Mammary epithelial cell (primary cell): ENCODE measurements at regions of chr7 and their contacts with region 1.

Region 1: DNA sequence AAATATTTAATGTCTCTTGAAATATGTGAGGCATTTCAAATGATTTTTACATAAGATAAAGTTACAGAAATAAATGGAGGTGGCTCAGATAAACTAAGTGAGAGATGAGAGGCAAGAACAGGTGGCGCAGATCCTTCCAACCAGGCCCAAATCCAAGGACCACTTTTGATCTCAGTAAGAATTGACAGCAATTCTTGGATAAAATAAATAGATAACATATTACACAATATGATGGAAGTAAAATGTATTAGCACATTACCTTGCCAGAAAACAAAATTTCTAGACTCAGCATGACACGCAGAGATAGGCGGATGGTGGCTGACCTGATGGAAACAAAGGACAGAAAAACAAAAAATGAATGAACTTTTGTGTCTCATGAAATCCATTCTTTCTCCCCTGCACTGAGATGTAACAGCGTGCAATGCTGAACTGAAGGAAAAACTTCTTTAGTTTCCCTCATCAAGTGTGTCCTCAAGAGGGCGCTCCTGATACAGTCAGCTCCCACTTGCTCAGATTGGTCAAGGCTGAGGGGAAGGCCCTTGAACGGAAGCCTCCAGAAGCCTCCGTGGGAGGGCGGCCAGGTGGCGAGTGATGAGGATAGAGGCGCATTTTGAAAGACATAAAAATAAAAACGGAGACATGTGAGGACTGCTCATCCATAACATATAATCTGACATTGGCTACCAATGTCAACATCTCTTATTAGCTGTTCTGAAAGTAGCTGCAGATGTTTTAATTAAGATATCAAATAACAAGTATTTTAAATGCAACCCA is 62.8 kb upstream of the GSDME start:
- DNase-seq: peak; percentile 82
- H3K4me3 ChIP-seq: no peak overlapping the region
- H3K27ac ChIP-seq: peak overlapping the region; percentile 98
- H3K4me1 ChIP-seq: peaks cover 36% of the 10 kb centered on the region
- H3K27me3 ChIP-seq: no peaks in the 10 kb centered on the region
- CTCF ChIP-seq: peak; percentile 94

Region 2: DNA sequence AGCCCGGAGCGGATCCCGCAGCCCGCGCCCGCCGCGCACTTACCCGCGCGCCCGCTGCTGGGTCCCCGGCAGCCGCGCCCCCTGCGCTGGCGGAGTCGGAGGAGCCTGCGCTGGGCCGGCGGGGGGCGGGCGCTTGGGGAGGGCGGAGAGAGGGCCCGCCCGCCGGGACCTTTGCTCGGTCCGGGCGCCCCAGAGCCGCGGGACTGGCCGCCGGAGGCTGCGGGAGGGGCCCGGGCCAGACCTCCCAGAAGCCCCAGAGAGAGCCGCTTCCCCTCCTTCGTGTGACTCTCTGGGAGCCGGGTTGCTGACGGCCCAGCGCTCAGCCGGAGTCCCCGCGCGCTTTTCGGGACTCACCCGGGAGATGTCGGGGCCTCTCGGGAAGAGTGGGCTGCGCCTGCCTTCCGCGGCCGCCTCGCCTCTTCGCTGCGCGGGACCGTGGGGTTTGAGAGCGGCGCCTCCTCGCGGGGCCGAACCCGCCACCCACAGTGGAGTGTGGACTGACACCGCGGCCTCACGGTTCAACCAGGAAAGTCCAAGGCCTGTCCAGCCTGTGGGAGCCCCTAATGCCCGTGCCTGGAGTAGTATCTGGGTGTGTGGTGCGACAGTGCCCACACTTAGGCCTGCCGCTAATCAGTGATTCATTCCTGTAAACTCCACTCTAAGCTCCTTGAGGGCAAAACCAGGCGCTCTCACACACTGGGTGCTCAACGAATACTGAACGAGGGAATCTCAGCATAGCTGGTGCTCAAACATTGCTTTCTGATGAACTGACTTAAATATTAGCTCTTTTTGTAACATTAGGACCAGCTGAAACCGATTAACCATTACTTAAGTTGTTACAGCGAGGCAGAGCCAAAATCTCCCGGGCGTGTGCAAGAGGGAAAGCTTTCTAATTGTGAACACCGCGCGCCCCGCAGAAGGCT is 62.5 kb before region 1 on chr7 and contains the start of gene GSDME:
- CTCF ChIA-PET with region 1: no interaction called
- dilution Hi-C with region 1: no loop called
- in situ Hi-C with region 1: no loop called
- intact Hi-C with region 1: loop called (anchors 2 kb)
- DNase-seq: peak; percentile 70
- H3K4me3 ChIP-seq: peak within 1 kb of the TSS; percentile 66 to 73 (median 66)
- H3K27ac ChIP-seq: peak within 1 kb of the TSS; percentile 97
- H3K4me1 ChIP-seq: peaks cover 37% of the 10 kb centered on the region
- H3K27me3 ChIP-seq: no peaks in the 10 kb centered on the region
- CTCF ChIP-seq: peak in 1 of 2 donors; percentile 24
- total RNA-seq, gene GSDME: 76.8 to 95.6 TPM

Region 3: GRCh38 chr7:24882989-24883621 is 63.0 kb after region 1 on chr7:
- CTCF ChIA-PET with region 1: no interaction called
- dilution Hi-C with region 1: no loop called
- in situ Hi-C with region 1: no loop called
- intact Hi-C with region 1: loop called (anchors 2 kb)
- DNase-seq: peak; percentile 71
- H3K4me3 ChIP-seq: no peak overlapping the region
- H3K27ac ChIP-seq: peak overlapping the region; percentile 31
- H3K4me1 ChIP-seq: peaks cover 14% of the 10 kb centered on the region
- H3K27me3 ChIP-seq: no peaks in the 10 kb centered on the region
- CTCF ChIP-seq: no peak

Region 4: GRCh38 chr7:24971333-24972165 is 151.4 kb after region 1 on chr7:
- CTCF ChIA-PET with region 1: no interaction called
- dilution Hi-C with region 1: no loop called
- in situ Hi-C with region 1: loop called in 1 of 2 experiments (anchors 5 kb)
- intact Hi-C with region 1: loop called (anchors 2 kb)
- DNase-seq: peak; percentile 94
- H3K4me3 ChIP-seq: peak overlapping the region in 2 of 3 experiments; percentile 18 to 40
- H3K27ac ChIP-seq: peak overlapping the region; percentile 100
- H3K4me1 ChIP-seq: peaks cover 72% of the 10 kb centered on the region
- H3K27me3 ChIP-seq: no peaks in the 10 kb centered on the region
- CTCF ChIP-seq: no peak

Region 5: GRCh38 chr7:25028370-25029021 is 208.4 kb after region 1 on chr7:
- CTCF ChIA-PET with region 1: no interaction called
- dilution Hi-C with region 1: no loop called
- in situ Hi-C with region 1: no loop called
- intact Hi-C with region 1: loop called (anchors 1 kb)
- DNase-seq: peak; percentile 87
- H3K4me3 ChIP-seq: no peak overlapping the region
- H3K27ac ChIP-seq: peak overlapping the region; percentile 91
- H3K4me1 ChIP-seq: peaks cover 48% of the 10 kb centered on the region
- H3K27me3 ChIP-seq: no peaks in the 10 kb centered on the region
- CTCF ChIP-seq: no peak

Region 6: DNA sequence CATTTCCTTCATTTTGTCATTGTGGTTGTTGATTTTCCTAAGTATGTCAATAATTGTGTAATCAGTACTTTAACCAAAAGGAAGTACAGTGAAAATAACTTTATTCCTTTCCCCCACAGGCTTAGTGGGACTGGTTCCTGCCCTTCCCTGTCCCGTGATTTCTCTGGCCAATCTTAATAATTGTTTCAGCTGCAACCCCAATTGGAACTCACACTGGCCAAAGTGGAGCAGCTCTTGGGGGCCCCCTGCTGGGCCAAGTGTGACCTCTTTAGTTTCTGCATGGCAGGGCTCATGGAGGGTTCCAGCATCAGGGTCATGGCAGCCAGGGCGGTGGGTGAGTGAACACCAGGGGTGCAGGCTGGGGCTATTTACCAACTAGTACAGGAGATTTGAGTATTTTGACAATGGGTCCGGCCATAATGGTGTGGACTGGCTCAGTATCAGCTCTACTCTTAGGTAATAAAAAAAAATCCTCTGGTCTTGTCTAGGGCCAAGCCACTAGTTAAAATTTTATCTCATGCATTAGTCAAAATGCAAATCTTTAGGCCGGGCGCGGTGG is 273.2 kb after region 1 on chr7:
- CTCF ChIA-PET with region 1: interaction called, 3 read pairs
- dilution Hi-C with region 1: no loop called
- in situ Hi-C with region 1: loop called in 1 of 2 experiments (anchors 5 kb)
- intact Hi-C with region 1: loop called (anchors 1 kb)
- DNase-seq: peak; percentile 65
- H3K4me3 ChIP-seq: no peak overlapping the region
- H3K27ac ChIP-seq: no peak overlapping the region
- H3K4me1 ChIP-seq: peaks cover 3% of the 10 kb centered on the region
- H3K27me3 ChIP-seq: no peaks in the 10 kb centered on the region
- CTCF ChIP-seq: peak; percentile 66 to 95